ENCODE measurements at regions of chr7 and their contacts with region 1.

Region 1: DNA sequence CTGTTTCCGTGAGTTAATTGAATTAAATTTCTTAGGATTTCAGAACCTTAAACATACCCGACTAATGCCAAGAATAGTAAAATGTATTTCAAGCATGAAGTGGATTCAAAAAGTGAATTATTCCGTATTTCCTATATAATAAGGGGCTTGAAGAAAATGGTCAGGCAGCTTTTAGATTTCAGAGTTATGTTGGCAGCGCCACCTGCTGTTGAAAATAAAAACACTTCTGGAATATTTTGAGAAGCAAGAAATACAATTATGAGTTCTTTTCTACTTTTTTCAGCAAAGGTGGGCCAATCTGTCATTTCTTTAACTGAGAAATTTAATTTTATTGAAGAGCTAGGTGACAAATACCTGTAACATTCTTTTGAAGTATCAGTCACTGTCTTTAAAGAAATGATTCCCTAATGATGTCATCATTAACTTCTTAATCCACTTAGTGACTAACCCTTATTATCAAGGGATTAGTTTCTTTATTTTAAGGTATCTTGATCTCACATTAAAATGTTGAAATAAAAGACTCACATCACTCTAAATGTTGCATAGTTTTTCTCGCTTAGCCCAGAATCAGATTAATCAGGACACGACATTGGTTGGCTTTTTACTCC is 36.6 kb upstream of the AGR3 start:
- H3K4me3 Mint-ChIP-seq: no peak overlapping the region
- H3K27ac Mint-ChIP-seq: no peak overlapping the region
- H3K4me1 Mint-ChIP-seq: no peaks in the 10 kb centered on the region
- H3K27me3 Mint-ChIP-seq: no peaks in the 10 kb centered on the region

Region 2: DNA sequence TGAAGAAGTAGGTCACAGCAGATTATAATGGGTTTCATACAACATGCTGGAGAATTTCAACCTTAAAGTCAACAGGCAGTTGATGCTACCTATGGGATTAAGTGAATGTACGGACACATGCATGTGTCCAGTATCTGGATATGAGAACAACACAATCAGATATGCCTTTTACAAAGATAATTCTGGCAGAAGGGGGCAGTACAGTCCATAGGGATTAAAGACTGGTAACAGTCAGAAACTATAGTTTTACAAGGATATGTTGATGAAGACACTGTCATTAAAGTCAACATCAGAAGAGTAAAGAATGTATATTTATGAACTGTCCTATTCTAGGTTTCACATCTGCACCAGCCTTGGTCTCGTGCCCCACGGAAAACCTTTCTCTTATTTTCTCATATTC is 314.3 kb before region 1 on chr7:
- intact Hi-C with region 1: loop called (anchors 5 kb)
- H3K4me3 Mint-ChIP-seq: no peak overlapping the region
- H3K27ac Mint-ChIP-seq: no peak overlapping the region
- H3K4me1 Mint-ChIP-seq: no peaks in the 10 kb centered on the region
- H3K27me3 Mint-ChIP-seq: no peaks in the 10 kb centered on the region

Region 3: GRCh38 chr7:16801111-16801542 is 117.3 kb before region 1 on chr7:
- intact Hi-C with region 1: loop called (anchors 1 kb)
- H3K4me3 Mint-ChIP-seq: no peak overlapping the region
- H3K27ac Mint-ChIP-seq: no peak overlapping the region
- H3K4me1 Mint-ChIP-seq: no peaks in the 10 kb centered on the region
- H3K27me3 Mint-ChIP-seq: no peaks in the 10 kb centered on the region

Region 4: GRCh38 chr7:16951483-16952080 is 33.2 kb after region 1 on chr7:
- intact Hi-C with region 1: no loop called
- H3K4me3 Mint-ChIP-seq: no peak overlapping the region
- H3K27ac Mint-ChIP-seq: no peak overlapping the region
- H3K4me1 Mint-ChIP-seq: no peaks in the 10 kb centered on the region
- H3K27me3 Mint-ChIP-seq: no peaks in the 10 kb centered on the region

Measured in dendritic cell treated with granulocyte-macrophage colony-stimulating factor and Interleukin-4, amounts not matched to agents 40 ng/mL and 50 ng/mL, for 4 days (primary cell).